ENCODE measurements at regions of chr9 and their contacts with region 1.

Region 1: DNA sequence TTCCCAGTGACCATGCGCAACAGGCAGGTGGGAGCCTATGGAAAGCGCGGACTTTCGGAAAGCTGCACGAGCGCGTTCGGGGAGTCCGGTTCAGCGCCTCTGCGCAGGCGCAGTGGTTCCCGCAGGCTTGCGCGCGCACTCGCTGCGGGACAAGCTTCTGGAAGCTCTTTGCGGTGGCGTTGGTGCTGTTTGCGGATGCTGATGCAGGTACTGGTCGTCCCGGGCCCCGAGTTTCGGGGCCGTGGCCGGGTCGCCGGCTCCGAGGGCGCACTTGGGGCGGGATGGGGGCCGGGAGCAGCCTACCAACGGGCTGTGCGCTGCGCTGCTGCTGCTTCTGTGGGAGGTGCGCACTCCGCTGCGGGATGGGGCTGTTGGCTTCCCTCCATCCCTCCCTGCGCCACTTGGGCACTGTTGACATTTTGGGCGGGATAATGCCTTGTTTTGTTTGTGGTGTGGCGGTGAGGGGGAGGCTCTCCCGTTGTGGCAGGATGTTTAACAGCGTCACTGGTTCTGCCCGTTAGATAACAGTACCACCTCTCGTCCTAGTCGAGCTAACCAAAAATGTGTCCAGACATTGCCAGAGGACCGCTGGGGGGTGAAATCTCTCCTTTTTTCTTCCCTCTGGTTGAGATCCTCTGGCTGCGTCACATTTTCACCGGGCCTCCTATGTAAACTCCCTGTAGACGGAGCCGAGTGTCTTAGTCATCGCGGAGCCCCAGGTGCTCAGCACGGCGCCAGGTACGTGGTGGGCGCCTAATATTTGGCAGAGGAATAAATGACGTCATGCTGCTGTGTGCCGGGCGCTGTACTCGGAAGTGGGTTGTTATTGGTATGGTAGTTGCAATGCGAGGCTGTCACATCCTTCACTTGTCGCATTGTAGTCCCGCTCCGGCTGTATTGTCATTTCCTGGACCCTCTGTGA is at the start of gene ZNF483:
- DNase-seq: peak; percentile 55 to 92 (median 76)
- ATAC-seq: peak; percentile 92
- H3K4me3 ChIP-seq: peak within 1 kb of the TSS; percentile 77
- H3K4me3 Mint-ChIP-seq: peak within 1 kb of the TSS; percentile 98
- H3K27ac ChIP-seq: peak within 1 kb of the TSS; percentile 70 to 88
- H3K27ac Mint-ChIP-seq: peak within 1 kb of the TSS; percentile 100
- H3K4me1 ChIP-seq: peaks cover 6% of the 10 kb centered on the region
- H3K4me1 Mint-ChIP-seq: peaks cover 28% of the 10 kb centered on the region
- H3K27me3 ChIP-seq: peaks cover 0 to 3% of the 10 kb centered on the region in 2 experiments
- H3K27me3 Mint-ChIP-seq: peaks cover 2% of the 10 kb centered on the region
- CTCF ChIP-seq: no peak
- total RNA-seq, gene ZNF483: 19.6 to 21.3 TPM

Region 2: DNA sequence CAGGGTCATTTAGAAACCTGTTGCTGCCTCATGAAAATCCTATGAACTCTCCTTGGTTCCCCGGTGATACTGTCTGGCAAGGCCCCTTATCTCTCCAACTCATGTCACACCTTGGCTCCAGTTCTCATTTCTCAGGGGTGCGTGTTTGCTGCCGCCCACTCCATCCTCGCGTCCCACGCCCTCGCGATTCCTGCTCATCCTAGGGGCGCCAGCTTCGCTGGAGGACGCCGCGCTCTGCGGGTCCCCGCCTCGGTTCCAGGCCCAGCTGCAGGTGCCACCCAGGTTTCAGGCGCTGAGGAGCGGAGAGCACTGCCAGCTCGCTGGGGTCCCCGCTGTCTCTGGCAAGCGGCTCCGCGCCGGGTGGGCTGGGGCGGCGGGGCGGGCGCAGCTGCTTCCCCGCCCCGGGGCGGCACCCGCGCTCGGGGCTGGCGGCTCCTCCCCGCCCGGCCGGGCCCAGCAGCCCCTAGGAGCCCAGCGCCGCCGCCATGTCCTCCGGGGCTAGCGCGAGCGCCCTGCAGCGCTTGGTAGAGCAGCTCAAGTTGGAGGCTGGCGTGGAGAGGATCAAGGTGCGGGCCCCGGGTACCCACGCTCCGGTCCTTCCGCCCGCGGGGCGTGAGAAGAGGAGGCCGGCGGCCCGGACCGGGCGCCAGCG is 136.0 kb after region 1 on chr9 and contains the start of gene GNG10:
- CTCF ChIA-PET with region 1: no interaction called
- POLR2A ChIA-PET with region 1: no interaction called
- intact Hi-C with region 1: loop called in 1 of 2 experiments (anchors 2 kb)
- DNase-seq: peak; percentile 48 to 82 (median 66)
- ATAC-seq: peak; percentile 95
- H3K4me3 ChIP-seq: peak within 1 kb of the TSS; percentile 70 to 95
- H3K4me3 Mint-ChIP-seq: peak within 1 kb of the TSS; percentile 95
- H3K27ac ChIP-seq: peak within 1 kb of the TSS; percentile 55 to 57
- H3K27ac Mint-ChIP-seq: peak within 1 kb of the TSS; percentile 92
- H3K4me1 ChIP-seq: peaks cover 24% of the 10 kb centered on the region
- H3K4me1 Mint-ChIP-seq: peaks cover 40% of the 10 kb centered on the region
- H3K27me3 ChIP-seq: no peaks in the 10 kb centered on the region
- H3K27me3 Mint-ChIP-seq: no peaks in the 10 kb centered on the region
- CTCF ChIP-seq: no peak
- total RNA-seq, gene GNG10: 1.6 to 2.6 TPM